ENCODE measurements at regions of chr7 and their contacts with region 1.

Region 1: DNA sequence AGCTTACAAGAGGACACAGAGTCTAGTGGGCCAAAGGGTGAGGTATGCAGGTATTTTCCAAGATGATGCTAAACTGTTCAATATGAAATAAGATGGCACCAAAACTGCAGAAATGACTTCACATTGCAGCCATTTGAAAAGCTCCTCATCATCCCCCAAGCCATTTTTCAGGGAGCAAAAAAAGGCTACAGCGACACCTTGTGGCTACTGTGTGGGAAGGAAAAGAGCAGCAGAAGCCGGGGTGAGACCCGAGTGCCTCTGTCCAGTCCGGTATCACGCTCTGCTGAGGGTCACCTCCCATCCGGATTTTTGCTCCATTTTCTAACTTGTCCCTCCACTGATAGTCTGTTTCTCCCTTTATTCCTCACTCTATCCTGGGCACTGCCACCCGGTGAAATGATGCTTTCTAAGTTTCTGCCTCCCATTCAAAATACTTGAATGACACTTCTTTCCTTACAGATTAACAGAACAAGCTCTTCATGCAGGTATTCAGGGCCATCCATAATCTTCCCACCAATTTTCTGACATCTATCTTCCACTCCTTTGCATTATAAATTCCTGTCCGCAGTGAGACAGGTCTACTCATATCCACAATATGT is 220.2 kb downstream of the DGKI start:
- DNase-seq: peak; percentile 6
- H3K4me3 ChIP-seq: no peak overlapping the region
- H3K27ac ChIP-seq: no peak overlapping the region
- H3K27me3 ChIP-seq: no peaks in the 10 kb centered on the region
- CTCF ChIP-seq: peak; percentile 81

Region 2: DNA sequence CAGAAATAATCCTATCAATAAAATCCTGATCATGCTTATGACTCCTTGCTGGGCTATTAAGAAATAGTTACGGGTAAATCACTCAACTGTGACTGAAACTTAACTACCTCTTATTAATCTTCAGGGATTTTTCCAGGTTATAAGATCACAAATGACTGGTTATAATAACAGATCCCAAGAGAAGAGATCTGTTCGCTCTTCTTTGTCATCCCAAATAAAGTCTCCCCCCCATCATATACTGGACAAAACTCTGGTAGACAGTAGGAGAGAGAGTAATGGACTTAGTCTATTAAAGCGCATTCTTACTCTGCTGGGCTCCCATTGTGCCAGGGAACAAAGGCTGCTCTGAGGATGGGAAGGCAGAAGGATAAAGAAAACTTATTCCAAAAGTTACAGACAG is 13.6 kb before region 1 on chr7:
- CTCF ChIA-PET with region 1: interaction called, 66 read pairs
- POLR2A ChIA-PET with region 1: no interaction called
- DNase-seq: no peak
- H3K4me3 ChIP-seq: no peak overlapping the region
- H3K27ac ChIP-seq: no peak overlapping the region
- H3K27me3 ChIP-seq: no peaks in the 10 kb centered on the region
- CTCF ChIP-seq: no peak

Region 3: DNA sequence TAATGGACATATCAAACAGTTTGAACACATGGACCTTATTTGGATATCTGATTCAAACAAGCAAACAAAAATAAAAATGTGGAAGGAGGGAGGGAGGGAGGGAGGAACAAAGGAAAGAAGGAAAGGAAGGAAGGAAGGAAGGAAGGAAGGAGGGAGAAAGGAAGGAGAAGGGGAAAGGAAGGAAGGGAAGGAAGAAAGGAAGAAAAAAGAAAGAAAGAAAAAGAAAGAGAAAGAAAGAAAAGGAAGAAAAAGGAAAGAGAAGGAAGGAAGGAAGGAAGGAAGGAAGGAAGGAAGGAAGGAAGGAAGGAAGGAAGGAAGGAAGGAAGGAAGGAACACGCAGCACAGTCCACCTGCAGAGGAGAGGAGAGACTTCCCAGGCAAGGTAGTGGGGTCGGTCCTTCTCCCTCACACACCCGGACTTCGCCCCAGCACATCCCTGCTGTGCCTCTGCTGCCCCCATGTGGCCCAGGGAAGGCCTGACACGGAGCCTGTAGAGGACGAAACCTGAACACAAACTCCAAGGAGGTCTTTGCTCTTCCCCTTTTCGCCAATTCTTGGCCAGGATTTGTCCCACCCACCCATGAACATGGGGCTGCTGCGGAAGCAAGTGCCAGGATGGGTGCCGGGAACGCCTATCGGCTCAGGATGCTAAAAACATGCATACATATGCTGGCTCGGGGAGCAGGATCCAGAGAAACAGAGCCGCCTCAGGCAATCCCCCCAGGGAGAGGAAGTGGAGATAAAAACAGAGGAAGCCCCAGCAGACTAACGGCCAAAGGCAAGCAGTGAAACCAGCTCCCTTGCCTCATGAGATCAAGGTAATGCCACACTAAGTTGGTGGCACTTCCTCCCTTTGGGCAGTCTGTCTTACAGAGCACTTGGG is 272.5 kb after region 1 on chr7:
- CTCF ChIA-PET with region 1: interaction called, 10 read pairs
- POLR2A ChIA-PET with region 1: no interaction called
- DNase-seq: peak; percentile 47
- H3K4me3 ChIP-seq: no peak overlapping the region
- H3K27ac ChIP-seq: peak overlapping the region; percentile 47
- H3K27me3 ChIP-seq: no peaks in the 10 kb centered on the region
- CTCF ChIP-seq: peak; percentile 98

Measured in AG04450 (cell line).